A549 (cell line): ENCODE measurements at regions of chr9 and their contacts with region 1.

Region 1: DNA sequence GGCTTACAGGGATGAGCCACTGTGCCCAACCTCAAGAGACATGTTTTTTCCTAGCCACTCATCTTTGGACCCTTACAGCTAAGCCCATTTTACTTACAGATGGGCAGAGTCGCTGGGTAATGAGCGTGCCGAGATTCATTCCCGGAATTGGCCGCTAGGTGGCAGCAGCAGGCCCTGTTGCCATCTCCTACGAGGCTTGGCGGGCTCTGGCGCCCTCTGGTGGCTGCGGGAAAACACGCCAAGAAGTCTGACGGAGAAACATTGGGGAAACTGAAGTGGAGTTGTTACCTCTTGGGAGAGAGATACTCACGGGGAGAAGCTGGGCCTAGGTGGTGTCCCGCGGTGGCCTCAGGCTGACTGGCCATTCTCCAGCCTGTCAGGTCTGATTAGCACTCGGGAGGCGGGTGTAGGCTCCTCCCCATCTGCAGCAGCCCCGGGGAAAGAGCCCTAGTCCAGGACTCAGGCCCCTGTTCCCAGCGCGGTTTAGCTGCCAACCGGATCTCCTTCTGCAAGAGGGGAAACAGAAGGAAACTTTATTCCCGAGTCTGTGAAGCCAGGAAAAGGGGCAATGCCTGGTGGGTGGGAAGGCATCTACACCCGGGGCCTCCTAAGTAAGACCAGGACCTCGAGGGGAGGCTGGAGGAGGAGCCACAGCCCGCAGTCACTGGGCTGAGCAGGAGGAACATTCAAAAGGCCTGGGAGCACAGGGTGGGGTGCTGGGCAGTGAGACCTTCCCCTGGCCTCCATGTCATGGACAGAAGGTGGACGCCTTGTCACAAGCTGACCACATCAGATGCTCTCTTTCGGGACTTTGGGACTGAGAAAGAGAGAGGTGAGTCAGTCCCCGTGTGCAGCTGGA is 9.7 kb downstream of the PTGES2 start:
- DNase-seq: peak; percentile 88 to 90
- ATAC-seq: peak; percentile 63 to 87; a peak in 4 of 6 replicates
- H3K4me3 ChIP-seq: no peak overlapping the region
- H3K27ac ChIP-seq: peak overlapping the region in 1 of 2 experiments; percentile 22; a peak in 1 of 6 replicates
- H3K4me1 ChIP-seq: 0 out of 3 replicates have a peak, but pooled peaks cover 2% of the 10 kb centered on the region
- CTCF ChIP-seq: peak; percentile 100
- EP300 ChIP-seq: no peak
- POLR2A ChIP-seq: no peak
- RAD21 ChIP-seq: peak; percentile 96 to 98

Region 2: DNA sequence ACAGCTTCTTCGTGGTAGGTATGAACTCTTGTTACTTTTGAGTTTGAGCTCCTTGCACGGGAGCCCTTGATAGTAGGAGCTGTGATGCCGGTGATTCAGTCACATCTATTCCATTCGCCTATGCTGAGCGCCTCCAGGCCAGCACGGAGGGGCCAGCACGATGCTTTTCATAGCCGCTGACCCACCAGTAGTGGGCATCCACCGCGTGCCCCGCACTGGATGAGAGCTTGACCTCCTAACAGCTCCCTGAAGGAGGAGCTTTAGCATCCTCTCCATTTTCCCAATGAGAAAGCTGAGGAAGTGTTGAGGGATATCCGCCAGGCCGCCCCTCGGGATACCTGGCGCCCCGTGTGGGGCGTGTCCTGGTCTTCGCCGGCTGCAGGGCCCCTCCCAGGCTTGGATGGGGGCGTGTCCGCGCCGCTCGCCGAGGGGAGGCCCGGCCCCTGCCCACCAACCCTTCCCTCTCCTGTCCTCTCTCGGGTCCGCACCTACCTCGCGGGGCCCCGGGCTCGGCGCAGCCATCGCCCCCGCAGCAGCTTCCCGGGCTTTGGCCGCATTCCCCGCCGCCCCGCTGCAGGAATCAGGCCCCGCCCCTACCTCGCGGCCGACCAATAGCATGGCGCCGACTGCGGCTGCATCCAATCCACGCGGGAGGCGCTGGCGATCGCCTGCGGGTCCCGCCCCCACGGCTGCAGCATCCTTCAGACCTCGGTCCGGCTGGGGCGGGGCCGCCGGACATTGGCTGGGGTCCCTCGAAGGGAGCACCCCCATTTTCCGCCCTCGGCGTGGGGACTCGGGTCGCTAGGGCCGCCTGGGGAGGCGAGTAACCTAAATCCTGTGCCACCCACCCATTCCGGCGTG is 187.4 kb before region 1 on chr9 and contains the start of gene PIP5KL1:
- CTCF ChIA-PET with region 1: interaction called, 13 read pairs
- POLR2A ChIA-PET with region 1: no interaction called
- DNase-seq: peak; percentile 89 to 95
- ATAC-seq: peak; percentile 72 to 86
- H3K4me3 ChIP-seq: peak within 1 kb of the TSS; percentile 54
- H3K27ac ChIP-seq: peak within 1 kb of the TSS; percentile 83 to 84
- H3K4me1 ChIP-seq: peaks cover 45% of the 10 kb centered on the region
- CTCF ChIP-seq: peak; percentile 10; the same call in 1 of the 3 replicates
- EP300 ChIP-seq: no peak
- POLR2A ChIP-seq: peak; percentile 13; the same call in 1 of the 2 replicates
- RAD21 ChIP-seq: no peak
- polyA plus RNA-seq, gene PIP5KL1: 1.8 and 2.4 TPM in 2 replicates

Region 3: DNA sequence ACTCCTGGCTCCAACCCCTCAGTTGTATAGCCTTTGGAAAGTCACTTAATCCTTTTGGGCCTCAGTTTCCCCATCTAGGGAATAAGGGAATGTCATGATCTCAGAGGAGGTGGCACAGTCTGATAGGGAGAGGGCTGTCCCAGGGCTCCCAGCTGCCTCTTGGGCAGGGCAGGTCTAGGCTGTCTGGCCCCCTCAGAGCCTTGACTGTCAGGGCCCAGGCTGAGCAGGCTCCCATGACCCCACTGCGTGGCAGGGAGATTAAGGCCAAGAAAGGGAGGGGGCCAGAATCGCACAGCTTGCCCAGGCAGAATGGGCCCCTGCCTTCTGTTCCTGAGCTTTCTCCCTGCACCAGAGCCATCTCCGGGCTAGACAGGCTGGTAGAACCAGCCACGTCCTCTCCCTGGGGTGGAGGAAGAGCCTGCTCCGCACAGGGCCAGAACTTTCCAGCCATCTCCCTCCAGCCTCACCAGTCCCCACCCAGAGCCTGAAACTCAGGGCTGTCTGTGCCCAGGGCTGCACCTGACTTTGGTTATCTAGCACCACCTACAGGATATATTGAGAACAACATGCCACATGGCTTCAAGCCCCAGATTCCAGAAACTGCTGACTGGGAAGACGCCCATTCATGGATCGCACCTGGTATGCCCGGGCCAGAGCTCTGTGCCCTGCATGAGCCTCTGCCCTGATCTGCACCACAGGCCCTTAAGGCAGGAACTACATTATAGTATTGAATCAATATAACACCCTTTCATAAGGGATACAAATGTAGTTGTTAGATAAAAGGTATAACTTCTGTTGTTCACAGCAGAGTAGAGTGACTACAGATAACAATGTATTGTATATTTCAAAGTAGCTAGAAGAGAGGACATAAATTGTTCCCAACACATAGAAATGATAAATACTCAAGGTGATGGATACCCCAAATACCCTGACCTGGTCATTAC is 82.7 kb before region 1 on chr9:
- CTCF ChIA-PET with region 1: interaction called, 13 read pairs
- POLR2A ChIA-PET with region 1: no interaction called
- DNase-seq: peak; percentile 89 to 91
- ATAC-seq: peak; percentile 97 to 98
- H3K4me3 ChIP-seq: no peak overlapping the region
- H3K27ac ChIP-seq: peak overlapping the region; percentile 61 to 87
- H3K4me1 ChIP-seq: peaks cover 5% of the 10 kb centered on the region; the same call in 1 of the 3 replicates
- CTCF ChIP-seq: peak; percentile 87
- EP300 ChIP-seq: no peak
- POLR2A ChIP-seq: no peak
- RAD21 ChIP-seq: peak; percentile 97 to 99

Region 4: DNA sequence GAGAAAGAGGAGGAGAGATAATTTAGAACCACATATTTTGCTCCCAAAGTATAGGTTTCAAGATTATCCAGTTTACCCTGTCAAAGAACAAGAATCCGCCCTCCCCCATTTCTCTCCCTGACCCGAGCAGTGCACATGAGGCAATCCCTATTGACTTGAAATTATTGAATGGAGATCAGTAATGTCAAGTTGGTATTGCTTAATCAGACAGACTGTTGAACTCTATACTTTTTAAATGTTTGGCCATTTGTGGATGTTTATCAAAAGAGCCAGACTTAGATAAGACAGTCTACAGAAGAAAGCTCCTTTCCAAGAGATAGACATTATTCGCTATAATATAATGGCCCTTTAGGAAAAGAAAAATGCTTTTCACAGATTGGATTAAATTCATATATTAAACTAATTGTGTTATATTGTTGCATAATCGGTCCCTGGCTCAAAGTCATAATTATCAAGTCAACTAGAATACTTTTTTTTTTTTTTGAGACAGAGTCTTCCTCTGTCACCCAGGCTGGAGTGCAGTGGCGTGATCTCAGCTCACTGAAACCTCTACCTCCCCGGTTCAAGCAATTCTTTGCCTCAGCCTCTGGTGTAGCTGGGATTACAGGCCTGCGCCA is 44.5 kb before region 1 on chr9:
- CTCF ChIA-PET with region 1: interaction called, 11 read pairs
- POLR2A ChIA-PET with region 1: no interaction called
- DNase-seq: no peak
- ATAC-seq: no peak
- H3K4me3 ChIP-seq: no peak overlapping the region
- H3K27ac ChIP-seq: peak overlapping the region; percentile 59 to 83
- H3K4me1 ChIP-seq: peaks cover 45% of the 10 kb centered on the region
- CTCF ChIP-seq: no peak
- EP300 ChIP-seq: no peak
- POLR2A ChIP-seq: no peak
- RAD21 ChIP-seq: no peak

Region 5: GRCh38 chr9:128127990-128128835 is 10.4 kb after region 1 on chr9:
- CTCF ChIA-PET with region 1: interaction called, 181 read pairs
- POLR2A ChIA-PET with region 1: interaction called, 5 read pairs
- DNase-seq: peak; percentile 51 to 93
- ATAC-seq: peak; percentile 71 to 88
- H3K4me3 ChIP-seq: peak overlapping the region; percentile 87
- H3K27ac ChIP-seq: peak overlapping the region; percentile 92 to 99
- H3K4me1 ChIP-seq: peaks cover 29% of the 10 kb centered on the region
- CTCF ChIP-seq: no peak
- EP300 ChIP-seq: no peak
- POLR2A ChIP-seq: peak; percentile 72
- RAD21 ChIP-seq: no peak

Region 6: GRCh38 chr9:128159784-128160602 is 42.2 kb after region 1 on chr9 and contains the start of gene BBLN:
- CTCF ChIA-PET with region 1: interaction called, 24 read pairs
- POLR2A ChIA-PET with region 1: no interaction called
- DNase-seq: peak; percentile 92 to 95
- ATAC-seq: peak; percentile 75 to 91
- H3K4me3 ChIP-seq: peak within 1 kb of the TSS; percentile 85
- H3K27ac ChIP-seq: peak within 1 kb of the TSS; percentile 86 to 89
- H3K4me1 ChIP-seq: peaks cover 11% of the 10 kb centered on the region; the same call in 1 of the 3 replicates
- CTCF ChIP-seq: no peak
- EP300 ChIP-seq: no peak
- POLR2A ChIP-seq: peak; percentile 69
- RAD21 ChIP-seq: no peak
- polyA plus RNA-seq, gene BBLN: 23.0 and 23.8 TPM in 2 replicates